Posterior vena cava (tissue), 2 donors: ENCODE measurements at regions of chr6 and their contacts with region 1.

Region 1: DNA sequence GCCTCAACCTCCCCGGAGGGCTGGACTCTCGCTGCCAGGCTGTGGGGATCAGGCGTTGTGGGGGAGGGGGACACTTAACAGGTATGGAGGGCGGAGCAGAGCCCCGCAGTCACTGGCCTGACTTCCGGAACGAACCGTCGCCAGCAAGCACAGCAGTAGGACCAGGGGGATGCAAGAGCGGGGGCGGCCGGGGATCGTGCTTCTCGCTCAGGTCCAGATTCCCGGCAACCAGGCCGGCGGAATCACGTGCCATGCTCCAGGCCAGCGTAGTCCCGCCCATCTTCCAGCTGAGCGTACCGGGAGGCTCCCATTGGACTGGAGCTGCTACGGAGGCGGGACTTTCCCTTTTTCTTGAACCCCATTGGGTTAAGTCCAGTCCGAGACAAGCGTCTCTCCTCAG is 10.0 kb upstream of the POU5F1 start:
- DNase-seq: peak; percentile 94

Region 2: DNA sequence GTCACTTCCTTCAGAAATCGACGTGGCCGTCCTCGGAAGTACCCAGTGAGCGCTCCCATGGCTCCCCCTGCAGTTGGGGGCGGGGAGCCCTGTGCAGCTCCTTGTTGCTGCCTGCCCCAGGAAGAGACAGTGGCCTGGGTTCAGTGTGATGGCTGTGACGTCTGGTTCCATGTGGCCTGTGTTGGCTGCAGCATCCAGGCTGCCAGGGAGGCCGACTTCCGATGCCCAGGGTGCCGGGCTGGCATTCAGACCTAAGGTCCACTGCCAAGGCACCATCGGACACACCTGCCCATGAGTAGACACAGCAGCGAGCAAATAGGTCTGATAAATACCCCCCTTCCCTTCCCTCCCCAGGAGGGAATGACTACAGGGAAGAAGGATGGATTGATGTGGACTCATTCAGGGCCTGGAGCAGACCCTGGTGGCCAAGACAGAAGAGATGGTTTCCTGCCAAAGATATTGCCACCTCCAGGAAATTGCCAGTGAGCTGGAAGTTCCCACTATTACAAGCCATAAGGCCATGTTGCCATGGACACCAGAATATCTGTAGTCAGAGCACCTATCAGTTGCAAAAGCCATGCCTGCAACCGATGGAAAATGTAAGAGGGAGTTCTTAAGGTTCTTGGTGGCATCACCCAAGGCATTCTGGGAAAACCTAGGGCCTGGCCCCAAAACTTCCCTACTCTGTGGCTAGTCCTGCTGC is 17.9 kb before region 1 on chr6:
- intact Hi-C with region 1: loop called in 1 of 2 experiments (anchors 1 kb)
- DNase-seq: peak; percentile 64

Region 3: DNA sequence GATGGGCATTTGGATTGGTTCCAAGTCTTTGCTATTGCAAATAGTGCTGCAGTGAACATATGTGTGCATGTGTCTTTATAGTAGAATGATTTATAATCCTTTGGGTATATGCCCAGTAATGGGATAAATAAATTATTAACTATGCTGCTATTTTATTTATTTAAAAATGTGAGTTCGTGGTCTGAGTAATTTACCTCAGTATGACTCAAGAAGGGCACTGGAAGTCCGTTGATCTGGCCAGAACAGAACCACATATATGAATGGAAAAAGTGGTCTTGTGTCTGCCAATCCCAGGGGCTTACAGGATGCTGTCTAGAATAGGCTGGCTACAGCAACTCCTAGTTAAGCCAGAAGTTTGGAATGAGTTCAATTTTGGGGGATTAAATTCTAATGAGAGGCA is 119.0 kb after region 1 on chr6:
- intact Hi-C with region 1: no loop called
- DNase-seq: no peak